ENCODE measurements at regions of chr3 and their contacts with region 1.

Region 1: GRCh38 chr3:45593708-45594609 is 592 bp upstream of the LIMD1 start:
- DNase-seq: peak; percentile 35 to 84 (median 63)
- ATAC-seq: peak; percentile 77
- H3K4me3 ChIP-seq: peak overlapping the region; percentile 81
- H3K4me3 Mint-ChIP-seq: peak overlapping the region; percentile 94
- H3K27ac ChIP-seq: peak overlapping the region; percentile 32 to 45
- H3K27ac Mint-ChIP-seq: peak overlapping the region; percentile 89
- H3K4me1 ChIP-seq: peaks cover 66% of the 10 kb centered on the region
- H3K4me1 Mint-ChIP-seq: peaks cover 57% of the 10 kb centered on the region
- H3K27me3 ChIP-seq: no peaks in the 10 kb centered on the region
- H3K27me3 Mint-ChIP-seq: no peaks in the 10 kb centered on the region
- CTCF ChIP-seq: no peak

Region 2: DNA sequence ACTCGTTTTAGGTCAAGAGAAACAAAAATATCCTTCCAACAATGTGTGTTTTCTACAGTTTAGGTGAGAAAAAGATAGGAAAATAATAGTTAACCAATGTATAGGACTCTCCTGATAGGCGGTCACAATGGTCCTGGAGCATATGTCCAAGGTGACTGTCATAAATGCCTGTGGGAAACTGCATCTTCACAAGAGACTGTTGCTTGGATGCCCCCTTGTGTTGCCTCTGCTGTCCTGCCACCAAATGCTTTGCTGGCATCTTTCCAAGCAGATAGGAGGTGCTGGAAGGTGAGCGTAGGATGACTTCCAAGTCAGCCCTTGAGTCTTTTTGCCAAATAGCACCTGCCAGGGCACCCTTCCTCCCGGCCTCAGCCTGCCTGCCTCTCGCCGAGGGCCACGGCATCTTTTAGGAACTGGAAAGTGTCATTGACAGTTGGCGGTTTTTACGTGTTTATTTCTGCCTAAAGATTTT is 71.2 kb after region 1 on chr3:
- CTCF ChIA-PET with region 1: interaction called, 8 read pairs
- POLR2A ChIA-PET with region 1: interaction called, 5 read pairs
- intact Hi-C with region 1: loop called in 1 of 2 experiments (anchors 2 kb)
- DNase-seq: peak; percentile 40 to 90 (median 59)
- ATAC-seq: peak; percentile 54
- H3K4me3 ChIP-seq: peak overlapping the region; percentile 60
- H3K4me3 Mint-ChIP-seq: peak overlapping the region; percentile 89
- H3K27ac ChIP-seq: peak overlapping the region; percentile 37 to 71
- H3K27ac Mint-ChIP-seq: peak overlapping the region; percentile 88
- H3K4me1 ChIP-seq: peaks cover 26% of the 10 kb centered on the region
- H3K4me1 Mint-ChIP-seq: peaks cover 25% of the 10 kb centered on the region
- H3K27me3 ChIP-seq: no peaks in the 10 kb centered on the region
- H3K27me3 Mint-ChIP-seq: no peaks in the 10 kb centered on the region
- CTCF ChIP-seq: peak; percentile 77